Activated naive CD4-positive, alpha-beta T cell treated with anti-CD3 and anti-CD28 coated beads for 36 hours (primary cell): ENCODE measurements at regions of chr12 and their contacts with region 1.

Region 1: DNA sequence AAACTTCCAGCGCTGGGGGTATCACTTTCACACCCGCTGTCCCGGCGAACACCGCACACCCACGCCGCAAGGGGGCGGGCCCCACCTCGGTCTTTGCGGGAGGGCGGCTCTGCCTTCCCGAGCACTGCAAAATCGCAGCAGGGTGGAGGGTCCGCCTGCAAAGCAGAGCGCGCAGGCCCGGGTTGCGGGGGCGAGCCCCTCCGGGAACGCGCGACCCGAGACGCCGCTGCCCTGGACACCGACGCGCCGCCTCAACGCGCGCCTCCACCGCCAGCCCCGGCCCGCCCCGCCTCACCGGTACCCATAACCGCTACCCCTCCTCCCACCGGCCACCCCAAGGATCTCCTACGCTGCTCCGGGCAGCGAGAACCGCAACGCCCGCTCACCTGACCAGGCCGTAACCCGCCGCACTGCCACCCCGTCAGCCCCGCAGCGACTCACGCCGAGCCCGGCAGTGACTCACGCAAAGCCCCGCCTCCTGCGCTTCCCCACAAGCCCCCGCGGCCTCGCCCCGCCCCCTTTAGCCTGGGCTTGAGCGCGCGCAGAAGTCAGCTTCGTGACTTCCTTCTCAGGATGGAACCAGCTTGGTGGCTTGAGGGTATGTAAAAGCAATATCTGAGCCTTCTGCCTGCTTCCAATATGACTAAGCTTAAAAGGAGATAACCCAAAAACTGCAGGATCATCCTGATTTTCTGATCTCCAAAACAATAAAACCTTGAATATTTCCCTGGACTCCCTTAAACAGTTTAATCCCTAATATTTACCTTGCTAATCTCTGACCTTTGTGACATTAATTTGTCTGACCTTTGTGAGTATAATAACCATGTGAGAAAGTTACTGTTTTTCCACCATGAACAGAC is at the start of gene RPAP3:
- DNase-seq: peak; percentile 99
- H3K4me3 Mint-ChIP-seq: peak within 1 kb of the TSS; percentile 93
- H3K27ac Mint-ChIP-seq: peak within 1 kb of the TSS; percentile 98
- H3K4me1 Mint-ChIP-seq: peaks cover 49% of the 10 kb centered on the region
- H3K27me3 Mint-ChIP-seq: no peaks in the 10 kb centered on the region
- total RNA-seq, gene RPAP3: 46.2 to 46.7 TPM

Region 2: GRCh38 chr12:46217541-46218321 is 1488.1 kb before region 1 on chr12:
- CTCF ChIA-PET with region 1: no interaction called
- intact Hi-C with region 1: loop called (anchors 5 kb)
- DNase-seq: peak; percentile 74
- H3K4me3 Mint-ChIP-seq: peak overlapping the region; percentile 33
- H3K27ac Mint-ChIP-seq: peak overlapping the region; percentile 100
- H3K4me1 Mint-ChIP-seq: peaks cover 95% of the 10 kb centered on the region
- H3K27me3 Mint-ChIP-seq: no peaks in the 10 kb centered on the region

Region 3: DNA sequence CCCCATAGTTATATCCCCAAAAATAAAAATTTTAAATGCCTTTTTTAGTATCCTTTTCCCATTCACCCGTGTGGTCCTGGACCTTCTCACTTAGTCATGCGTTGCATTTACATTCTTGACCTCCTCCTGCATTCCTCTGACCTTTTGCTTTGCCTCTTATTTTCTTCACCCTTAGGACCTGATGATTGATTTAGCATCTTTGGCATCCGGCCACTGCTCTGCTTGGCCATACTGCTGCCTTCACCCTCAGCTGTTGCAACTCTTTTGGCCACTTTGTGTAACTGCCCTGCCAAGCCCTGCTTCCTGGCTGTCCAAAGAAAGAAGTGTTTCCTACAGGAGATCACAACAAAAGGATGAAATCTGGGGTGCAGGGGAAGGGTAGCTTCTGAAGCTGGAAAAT is 831.2 kb before region 1 on chr12:
- CTCF ChIA-PET with region 1: no interaction called
- intact Hi-C with region 1: no loop called
- DNase-seq: no peak
- H3K4me3 Mint-ChIP-seq: no peak overlapping the region
- H3K27ac Mint-ChIP-seq: no peak overlapping the region
- H3K4me1 Mint-ChIP-seq: no peaks in the 10 kb centered on the region
- H3K27me3 Mint-ChIP-seq: peaks cover 20% of the 10 kb centered on the region

Region 4: GRCh38 chr12:47216150-47216677 is 489.6 kb before region 1 on chr12:
- CTCF ChIA-PET with region 1: no interaction called
- intact Hi-C with region 1: loop called (anchors 5 kb)
- DNase-seq: peak; percentile 83
- H3K4me3 Mint-ChIP-seq: peak overlapping the region; percentile 94
- H3K27ac Mint-ChIP-seq: peak overlapping the region; percentile 100
- H3K4me1 Mint-ChIP-seq: peaks cover 12% of the 10 kb centered on the region
- H3K27me3 Mint-ChIP-seq: no peaks in the 10 kb centered on the region

Region 5: DNA sequence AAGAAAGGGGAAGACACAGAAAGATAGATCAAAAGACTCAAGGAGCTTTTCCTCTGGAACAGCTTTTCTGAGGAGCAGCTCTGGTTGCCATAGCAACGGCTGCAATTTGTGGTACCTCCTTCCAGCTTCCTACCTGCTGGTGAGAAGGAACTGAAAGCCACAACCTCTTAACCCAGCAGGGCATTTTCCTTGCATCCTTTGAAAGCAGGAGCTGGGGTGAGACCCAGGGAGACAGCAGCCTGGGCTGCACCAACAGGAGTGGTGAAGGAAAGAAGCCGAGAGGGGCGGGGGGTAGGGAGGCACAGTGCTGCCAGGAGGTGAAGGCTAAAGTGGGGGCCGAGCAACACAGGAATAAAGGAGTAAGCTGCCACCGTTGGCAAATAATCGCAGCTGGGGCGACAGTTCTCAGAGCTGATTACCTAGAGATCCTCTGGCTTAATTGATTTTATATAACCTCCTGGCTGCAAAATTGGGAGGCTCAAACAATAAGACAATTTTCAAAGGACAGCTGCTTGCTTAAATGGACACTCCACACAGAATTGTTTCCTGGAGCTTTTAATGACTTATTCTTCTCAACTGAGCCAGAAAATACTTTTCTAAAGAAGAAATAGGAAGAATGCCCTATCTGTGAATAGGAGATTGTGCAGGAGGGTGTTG is 129.4 kb before region 1 on chr12:
- CTCF ChIA-PET with region 1: no interaction called
- intact Hi-C with region 1: loop called (anchors 1 kb)
- DNase-seq: no peak
- H3K4me3 Mint-ChIP-seq: no peak overlapping the region
- H3K27ac Mint-ChIP-seq: no peak overlapping the region
- H3K4me1 Mint-ChIP-seq: peaks cover 30% of the 10 kb centered on the region
- H3K27me3 Mint-ChIP-seq: no peaks in the 10 kb centered on the region

Region 6: GRCh38 chr12:47767216-47767724 is 61.5 kb after region 1 on chr12:
- CTCF ChIA-PET with region 1: interaction called, 11 read pairs
- intact Hi-C with region 1: loop called (anchors 2 kb)
- DNase-seq: peak; percentile 89
- H3K4me3 Mint-ChIP-seq: no peak overlapping the region
- H3K27ac Mint-ChIP-seq: no peak overlapping the region
- H3K4me1 Mint-ChIP-seq: no peaks in the 10 kb centered on the region
- H3K27me3 Mint-ChIP-seq: no peaks in the 10 kb centered on the region

Region 7: GRCh38 chr12:47882781-47883546 is 177.2 kb after region 1 on chr12:
- CTCF ChIA-PET with region 1: no interaction called
- intact Hi-C with region 1: loop called (anchors 1 kb)
- DNase-seq: peak; percentile 73
- H3K4me3 Mint-ChIP-seq: peak overlapping the region; percentile 78
- H3K27ac Mint-ChIP-seq: peak overlapping the region; percentile 97
- H3K4me1 Mint-ChIP-seq: peaks cover 69% of the 10 kb centered on the region
- H3K27me3 Mint-ChIP-seq: no peaks in the 10 kb centered on the region